ENCODE measurements at regions of chr3 and their contacts with region 1.

Region 1: DNA sequence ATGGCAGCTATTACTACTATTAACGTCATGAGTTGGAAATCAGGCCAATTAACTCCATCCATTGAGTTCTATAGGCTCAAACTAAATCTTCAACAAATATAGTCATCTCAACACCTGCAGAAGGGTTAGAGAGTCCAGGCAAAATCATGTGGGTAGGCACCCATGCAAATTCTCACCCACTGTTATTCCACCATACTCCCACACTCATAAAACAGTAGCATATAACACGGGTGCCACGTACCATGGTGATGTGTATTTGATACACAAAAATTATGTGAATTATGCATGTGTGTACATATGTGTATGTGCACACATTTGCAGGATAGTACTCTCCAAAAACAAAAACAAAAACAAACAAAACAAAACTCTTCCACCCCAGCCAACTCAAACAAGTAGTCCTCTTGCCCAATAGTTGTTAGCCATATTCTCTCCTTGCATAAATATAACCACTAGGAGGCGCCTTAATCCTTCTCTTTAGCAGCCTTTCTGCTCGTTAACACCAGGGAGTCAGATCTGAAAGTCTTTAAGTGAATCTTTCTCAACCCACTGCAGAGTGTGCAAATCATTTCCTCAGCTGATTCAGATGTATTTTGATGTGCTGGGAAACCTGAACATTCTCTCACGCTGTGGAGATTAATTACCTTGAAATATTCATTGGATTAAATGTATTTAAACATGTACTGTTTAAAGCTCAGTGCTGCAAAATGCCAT is 38.0 kb upstream of the COPB2 start:
- DNase-seq: no peak
- H3K4me3 ChIP-seq: no peak overlapping the region
- H3K27ac ChIP-seq: no peak overlapping the region
- H3K4me1 ChIP-seq: no peaks in the 10 kb centered on the region
- H3K27me3 ChIP-seq: no peaks in the 10 kb centered on the region
- CTCF ChIP-seq: peak; percentile 75 to 85

Region 2: DNA sequence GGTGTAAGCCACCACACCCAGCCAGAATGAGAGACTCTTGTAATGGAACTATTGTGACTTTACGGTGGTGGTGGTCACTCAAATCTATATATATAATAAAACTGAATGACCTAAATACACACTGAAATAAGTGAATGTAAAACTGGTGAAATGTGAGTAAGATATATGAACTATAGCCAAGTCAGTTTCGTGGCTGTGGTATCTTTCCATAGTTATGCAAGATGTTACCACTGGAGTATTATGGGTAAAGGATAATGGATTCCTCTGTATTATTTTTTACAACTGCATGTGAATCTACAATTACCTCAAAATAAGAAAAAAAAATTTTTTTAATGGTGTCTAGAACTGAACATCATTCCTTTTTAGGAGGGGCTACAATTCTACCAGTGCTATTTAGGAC is 614.6 kb before region 1 on chr3:
- intact Hi-C with region 1: no loop called
- DNase-seq: no peak
- H3K4me3 ChIP-seq: no peak overlapping the region
- H3K27ac ChIP-seq: no peak overlapping the region
- H3K4me1 ChIP-seq: peaks cover 0 to 4% (median 1%) of the 10 kb centered on the region in 4 donors
- H3K27me3 ChIP-seq: no peaks in the 10 kb centered on the region
- CTCF ChIP-seq: no peak

Region 3: GRCh38 chr3:139561959-139562676 is 134.7 kb after region 1 on chr3:
- intact Hi-C with region 1: loop called (anchors 10 kb)
- DNase-seq: no peak
- H3K4me3 ChIP-seq: no peak overlapping the region
- H3K27ac ChIP-seq: no peak overlapping the region
- H3K4me1 ChIP-seq: no peaks in the 10 kb centered on the region
- H3K27me3 ChIP-seq: no peaks in the 10 kb centered on the region
- CTCF ChIP-seq: peak; percentile 49 to 70

Region 4: DNA sequence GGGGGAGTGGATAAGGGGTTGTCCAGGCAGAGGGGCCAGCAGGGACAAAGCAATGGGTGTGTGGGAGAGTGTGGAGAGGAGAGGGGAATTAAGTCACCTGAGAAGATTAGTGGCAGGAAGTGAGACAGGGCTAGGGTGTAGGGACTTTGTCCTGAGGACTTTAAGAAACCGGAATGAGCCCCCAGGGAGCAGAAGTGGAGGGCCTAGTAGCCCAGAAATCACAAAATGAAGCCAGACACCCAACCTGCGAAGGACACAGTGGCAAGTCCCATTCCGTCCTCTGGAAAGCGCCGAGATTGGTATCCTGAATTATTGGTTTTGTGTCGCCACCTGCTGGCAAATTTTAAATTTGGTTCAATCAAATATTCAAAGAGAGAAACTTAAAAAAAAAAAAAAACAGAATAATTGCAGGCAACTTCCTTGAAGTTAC is 1436.2 kb after region 1 on chr3:
- intact Hi-C with region 1: loop called (anchors 10 kb)
- DNase-seq: peak in 1 of 2 donors; percentile 36
- H3K4me3 ChIP-seq: no peak overlapping the region
- H3K27ac ChIP-seq: no peak overlapping the region
- H3K4me1 ChIP-seq: no peaks in the 10 kb centered on the region
- H3K27me3 ChIP-seq: no peaks in the 10 kb centered on the region
- CTCF ChIP-seq: peak; percentile 18 to 19

Measured in tibial artery (tissue), 4 donors.